Activated CD8-positive, alpha-beta T cell treated with anti-CD3 and anti-CD28 coated beads for 36 hours (primary cell): ENCODE measurements at regions of chr14 and their contacts with region 1.

Region 1: DNA sequence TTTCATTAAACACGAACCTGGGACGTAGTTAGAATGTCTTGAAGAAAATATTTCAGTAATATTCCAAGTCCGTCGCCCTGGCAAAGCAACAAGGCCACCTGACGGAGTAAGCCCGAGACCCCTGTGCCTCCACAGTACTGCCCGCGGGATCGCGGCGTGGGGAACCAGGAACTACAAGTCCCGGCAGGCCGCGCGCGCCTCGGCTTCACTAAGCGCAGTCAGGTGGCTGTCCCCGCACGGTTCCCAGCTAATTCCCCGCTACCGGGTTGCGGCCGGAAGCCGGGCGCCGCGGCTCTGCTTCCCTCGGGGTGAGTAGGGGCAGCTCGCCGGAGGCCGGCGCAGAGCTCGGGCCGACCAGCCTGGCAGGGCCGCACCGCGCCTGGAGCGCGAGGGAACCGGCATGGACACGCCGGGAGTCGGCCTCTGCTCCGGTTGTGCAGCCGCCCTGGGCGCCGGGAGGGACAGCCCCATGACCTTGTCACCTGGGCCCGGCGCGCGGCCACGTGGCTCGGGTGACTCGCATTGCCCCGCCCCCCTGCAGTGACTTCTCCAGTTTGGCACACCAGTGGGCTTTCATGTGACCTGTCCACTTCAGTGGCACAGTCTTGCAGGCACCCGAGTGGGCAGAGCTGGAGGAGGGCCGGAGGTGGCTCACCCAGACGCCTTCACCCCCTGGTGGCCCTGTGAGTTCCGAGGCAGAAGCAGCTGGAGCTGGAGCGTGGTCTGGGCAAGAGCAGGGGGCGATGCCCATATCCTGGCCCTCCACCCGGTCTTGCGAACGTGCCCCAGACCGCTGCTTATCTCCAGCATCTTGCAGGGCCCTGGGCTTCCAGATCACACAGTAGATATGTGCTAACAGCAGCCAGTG is at the start of gene ADCK1:
- DNase-seq: peak; percentile 93
- ATAC-seq: peak; percentile 94
- H3K4me3 Mint-ChIP-seq: peak within 1 kb of the TSS; percentile 82
- H3K27ac Mint-ChIP-seq: peak within 1 kb of the TSS; percentile 91
- H3K4me1 Mint-ChIP-seq: peaks cover 3% of the 10 kb centered on the region
- H3K27me3 Mint-ChIP-seq: no peaks in the 10 kb centered on the region
- CTCF ChIP-seq: no peak
- total RNA-seq, gene ADCK1: 5.2 to 5.6 TPM

Region 2: GRCh38 chr14:77760381-77761246 is 39.5 kb before region 1 on chr14 and contains the start of gene SNW1:
- CTCF ChIA-PET with region 1: interaction called, 7 read pairs
- POLR2A ChIA-PET with region 1: interaction called, 4 read pairs
- intact Hi-C with region 1: loop called (anchors 1 kb)
- DNase-seq: peak; percentile 94
- ATAC-seq: peak; percentile 95
- H3K4me3 Mint-ChIP-seq: peak within 1 kb of the TSS; percentile 96
- H3K27ac Mint-ChIP-seq: peak within 1 kb of the TSS; percentile 98
- H3K4me1 Mint-ChIP-seq: peaks cover 32% of the 10 kb centered on the region
- H3K27me3 Mint-ChIP-seq: no peaks in the 10 kb centered on the region
- CTCF ChIP-seq: no peak
- total RNA-seq, gene SNW1: 95.2 to 121 TPM

Region 3: GRCh38 chr14:77782202-77782601 is 17.9 kb before region 1 on chr14:
- CTCF ChIA-PET with region 1: no interaction called
- POLR2A ChIA-PET with region 1: no interaction called
- intact Hi-C with region 1: no loop called
- DNase-seq: no peak
- ATAC-seq: no peak
- H3K4me3 Mint-ChIP-seq: no peak overlapping the region
- H3K27ac Mint-ChIP-seq: no peak overlapping the region
- H3K4me1 Mint-ChIP-seq: no peaks in the 10 kb centered on the region
- H3K27me3 Mint-ChIP-seq: no peaks in the 10 kb centered on the region
- CTCF ChIP-seq: no peak